Activated CD4-positive, alpha-beta T cell treated with anti-CD3 and anti-CD28 coated beads for 36 hours (primary cell): ENCODE measurements at regions of chr21 and their contacts with region 1.

Region 1: GRCh38 chr21:29298348-29299045 is at the start of gene BACH1:
- DNase-seq: peak; percentile 95
- ATAC-seq: peak; percentile 72
- H3K4me3 Mint-ChIP-seq: peak within 1 kb of the TSS; percentile 87
- H3K27ac Mint-ChIP-seq: peak within 1 kb of the TSS; percentile 96
- H3K4me1 Mint-ChIP-seq: peaks cover 62% of the 10 kb centered on the region
- H3K27me3 Mint-ChIP-seq: no peaks in the 10 kb centered on the region
- total RNA-seq, gene BACH1: 24.1 to 27.0 TPM

Region 2: GRCh38 chr21:28427394-28428022 is 871.0 kb before region 1 on chr21:
- CTCF ChIA-PET with region 1: no interaction called
- POLR2A ChIA-PET with region 1: no interaction called
- intact Hi-C with region 1: no loop called
- DNase-seq: no peak
- ATAC-seq: no peak
- H3K4me3 Mint-ChIP-seq: no peak overlapping the region
- H3K27ac Mint-ChIP-seq: no peak overlapping the region
- H3K4me1 Mint-ChIP-seq: no peaks in the 10 kb centered on the region
- H3K27me3 Mint-ChIP-seq: peaks cover 2% of the 10 kb centered on the region

Region 3: GRCh38 chr21:29024474-29025327 is 273.8 kb before region 1 on chr21 and contains the start of gene USP16:
- CTCF ChIA-PET with region 1: no interaction called
- POLR2A ChIA-PET with region 1: interaction called, 4 read pairs
- intact Hi-C with region 1: loop called in 1 of 2 experiments (anchors 1 kb)
- DNase-seq: peak; percentile 94
- ATAC-seq: peak; percentile 95
- H3K4me3 Mint-ChIP-seq: peak within 1 kb of the TSS; percentile 90
- H3K27ac Mint-ChIP-seq: peak within 1 kb of the TSS; percentile 96
- H3K4me1 Mint-ChIP-seq: peaks cover 46% of the 10 kb centered on the region
- H3K27me3 Mint-ChIP-seq: no peaks in the 10 kb centered on the region
- total RNA-seq, gene USP16: 41.1 to 41.7 TPM

Region 4: DNA sequence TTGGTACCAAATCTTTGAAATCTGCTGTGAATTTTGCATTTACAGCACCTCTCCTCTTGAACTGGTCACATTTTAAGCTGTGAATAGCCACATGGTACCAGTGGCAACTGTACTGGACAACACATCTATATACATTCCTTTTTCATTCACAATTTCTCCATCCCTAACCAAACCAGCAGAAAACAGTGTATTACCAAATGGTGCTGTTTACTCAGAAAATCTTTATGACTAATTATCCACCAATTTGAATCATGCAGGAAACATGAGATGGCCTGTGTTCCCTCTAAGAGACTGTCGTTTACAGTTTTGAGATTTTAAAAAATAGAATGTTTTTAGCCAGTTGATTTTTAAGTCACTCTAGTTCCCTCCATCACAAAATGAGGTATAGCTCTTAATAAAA is 207.5 kb before region 1 on chr21:
- CTCF ChIA-PET with region 1: no interaction called
- POLR2A ChIA-PET with region 1: no interaction called
- intact Hi-C with region 1: loop called (anchors 1 to 2 kb)
- DNase-seq: no peak
- ATAC-seq: peak; percentile 71
- H3K4me3 Mint-ChIP-seq: no peak overlapping the region
- H3K27ac Mint-ChIP-seq: no peak overlapping the region
- H3K4me1 Mint-ChIP-seq: peaks cover 17% of the 10 kb centered on the region
- H3K27me3 Mint-ChIP-seq: no peaks in the 10 kb centered on the region

Region 5: GRCh38 chr21:29195981-29196669 is 102.4 kb before region 1 on chr21:
- CTCF ChIA-PET with region 1: interaction called, 4 read pairs
- POLR2A ChIA-PET with region 1: no interaction called
- intact Hi-C with region 1: loop called (anchors 1 kb)
- DNase-seq: peak; percentile 85
- ATAC-seq: peak; percentile 97
- H3K4me3 Mint-ChIP-seq: peak overlapping the region; percentile 64
- H3K27ac Mint-ChIP-seq: peak overlapping the region; percentile 93
- H3K4me1 Mint-ChIP-seq: peaks cover 34% of the 10 kb centered on the region
- H3K27me3 Mint-ChIP-seq: peaks cover 2% of the 10 kb centered on the region

Region 6: DNA sequence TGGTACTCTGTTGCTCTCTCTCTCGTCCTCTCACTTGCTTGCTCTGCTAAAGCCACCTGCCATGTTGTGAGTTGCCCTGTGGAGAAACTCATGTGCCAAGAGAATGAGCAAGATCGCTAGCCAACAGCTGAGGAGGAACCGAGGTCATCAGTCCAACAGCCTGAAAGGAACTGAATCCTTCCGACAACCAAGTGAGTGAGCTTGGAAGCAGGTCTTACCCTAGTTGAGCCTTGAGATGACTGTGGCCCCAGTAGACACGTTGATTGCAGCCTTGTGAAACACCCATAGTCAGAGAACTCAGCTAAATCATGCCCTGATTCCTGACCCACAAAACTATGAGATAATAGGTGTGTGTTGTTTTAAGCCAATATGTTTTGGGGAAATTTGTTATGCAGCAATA is 47.9 kb before region 1 on chr21:
- CTCF ChIA-PET with region 1: interaction called, 11 read pairs
- POLR2A ChIA-PET with region 1: interaction called, 17 read pairs
- intact Hi-C with region 1: loop called (anchors 1 to 5 kb)
- DNase-seq: no peak
- ATAC-seq: no peak
- H3K4me3 Mint-ChIP-seq: no peak overlapping the region
- H3K27ac Mint-ChIP-seq: no peak overlapping the region
- H3K4me1 Mint-ChIP-seq: peaks cover under 1% of the 10 kb centered on the region
- H3K27me3 Mint-ChIP-seq: peaks cover 24% of the 10 kb centered on the region

Region 7: GRCh38 chr21:29267666-29268065 is 30.8 kb before region 1 on chr21:
- CTCF ChIA-PET with region 1: no interaction called
- POLR2A ChIA-PET with region 1: no interaction called
- intact Hi-C with region 1: no loop called
- DNase-seq: no peak
- ATAC-seq: no peak
- H3K4me3 Mint-ChIP-seq: no peak overlapping the region
- H3K27ac Mint-ChIP-seq: no peak overlapping the region
- H3K4me1 Mint-ChIP-seq: peaks cover 10% of the 10 kb centered on the region
- H3K27me3 Mint-ChIP-seq: no peaks in the 10 kb centered on the region

Region 8: DNA sequence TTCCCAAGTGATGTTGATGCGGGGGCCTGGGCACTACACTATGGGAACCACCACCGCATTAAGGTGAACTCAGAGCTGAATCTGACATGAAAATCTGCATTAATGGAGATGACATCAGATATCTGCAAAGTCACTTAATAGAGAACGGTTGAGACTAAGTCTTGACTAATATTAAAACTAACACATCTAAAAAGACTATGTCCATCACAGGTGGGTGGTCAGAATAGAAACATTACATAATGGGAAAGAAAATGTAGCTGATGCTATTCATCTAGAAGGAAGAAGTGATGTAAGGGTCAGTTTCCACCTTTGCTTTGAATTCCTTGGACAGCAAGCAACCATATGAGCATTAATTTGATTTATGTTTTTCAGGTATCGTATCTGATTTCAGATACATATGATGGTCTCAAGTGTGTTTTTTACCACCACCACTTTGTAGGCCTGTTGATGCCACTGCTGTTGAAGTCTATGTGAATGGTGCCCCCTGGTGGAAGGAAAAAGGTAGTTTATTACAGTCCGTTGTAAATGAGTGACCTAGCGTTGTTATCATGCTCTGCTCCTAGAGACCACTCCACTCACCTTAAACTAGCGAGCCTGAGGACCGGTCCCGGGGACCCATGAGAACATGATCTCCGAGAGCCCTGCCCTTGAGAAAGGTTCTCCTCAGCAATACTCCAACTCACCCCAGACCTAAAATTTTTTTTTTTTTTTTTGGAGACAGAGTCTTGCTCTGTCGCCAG is 73.7 kb after region 1 on chr21:
- CTCF ChIA-PET with region 1: interaction called, 3 read pairs
- POLR2A ChIA-PET with region 1: interaction called, 5 read pairs
- intact Hi-C with region 1: loop called (anchors 1 to 5 kb)
- DNase-seq: peak; percentile 61
- ATAC-seq: peak; percentile 65
- H3K4me3 Mint-ChIP-seq: no peak overlapping the region
- H3K27ac Mint-ChIP-seq: peak overlapping the region; percentile 38
- H3K4me1 Mint-ChIP-seq: peaks cover 30% of the 10 kb centered on the region
- H3K27me3 Mint-ChIP-seq: no peaks in the 10 kb centered on the region

Region 9: GRCh38 chr21:29557200-29557599 is 258.7 kb after region 1 on chr21:
- CTCF ChIA-PET with region 1: no interaction called
- POLR2A ChIA-PET with region 1: no interaction called
- intact Hi-C with region 1: no loop called
- DNase-seq: no peak
- ATAC-seq: no peak
- H3K4me3 Mint-ChIP-seq: no peak overlapping the region
- H3K27ac Mint-ChIP-seq: no peak overlapping the region
- H3K4me1 Mint-ChIP-seq: no peaks in the 10 kb centered on the region
- H3K27me3 Mint-ChIP-seq: no peaks in the 10 kb centered on the region

Region 10: DNA sequence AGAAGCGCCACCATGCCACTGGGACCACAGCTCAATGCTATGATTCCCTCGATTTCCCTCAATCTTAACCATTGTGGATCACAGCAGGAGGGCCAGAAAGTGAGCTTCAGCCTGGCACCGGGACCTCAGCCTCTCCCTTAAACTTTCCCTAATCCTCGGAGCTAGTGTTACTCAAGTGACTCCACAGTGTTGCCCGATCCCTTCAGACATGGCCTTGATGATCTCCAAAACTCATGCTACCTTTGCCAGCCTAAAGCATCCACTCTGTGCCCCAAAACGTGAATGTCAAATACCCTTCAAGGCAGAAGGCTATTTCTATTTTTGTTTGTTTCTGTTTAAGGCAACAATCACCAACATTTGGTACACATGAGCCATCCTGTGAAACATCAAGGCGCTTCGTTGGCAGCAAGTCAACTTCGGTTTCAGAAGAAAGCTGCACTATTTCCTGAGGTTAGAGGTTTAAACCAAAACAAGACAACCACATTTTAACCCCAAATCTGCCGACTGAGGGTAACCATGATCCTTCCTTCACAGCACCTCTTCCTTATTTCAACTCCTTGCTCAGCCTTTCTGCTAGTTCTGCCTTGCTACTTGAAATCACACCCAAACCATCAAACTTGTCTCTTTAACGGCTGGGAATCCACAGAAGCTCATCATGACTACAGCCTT is 1834.2 kb after region 1 on chr21:
- CTCF ChIA-PET with region 1: no interaction called
- POLR2A ChIA-PET with region 1: no interaction called
- intact Hi-C with region 1: loop called in 1 of 2 experiments (anchors 5 kb)
- DNase-seq: peak; percentile 84
- ATAC-seq: peak; percentile 75
- H3K4me3 Mint-ChIP-seq: peak overlapping the region; percentile 43
- H3K27ac Mint-ChIP-seq: peak overlapping the region; percentile 92
- H3K4me1 Mint-ChIP-seq: peaks cover 60% of the 10 kb centered on the region
- H3K27me3 Mint-ChIP-seq: no peaks in the 10 kb centered on the region